PC-3 (cell line): ENCODE measurements at regions of chr12 and their contacts with region 1.

Region 1: DNA sequence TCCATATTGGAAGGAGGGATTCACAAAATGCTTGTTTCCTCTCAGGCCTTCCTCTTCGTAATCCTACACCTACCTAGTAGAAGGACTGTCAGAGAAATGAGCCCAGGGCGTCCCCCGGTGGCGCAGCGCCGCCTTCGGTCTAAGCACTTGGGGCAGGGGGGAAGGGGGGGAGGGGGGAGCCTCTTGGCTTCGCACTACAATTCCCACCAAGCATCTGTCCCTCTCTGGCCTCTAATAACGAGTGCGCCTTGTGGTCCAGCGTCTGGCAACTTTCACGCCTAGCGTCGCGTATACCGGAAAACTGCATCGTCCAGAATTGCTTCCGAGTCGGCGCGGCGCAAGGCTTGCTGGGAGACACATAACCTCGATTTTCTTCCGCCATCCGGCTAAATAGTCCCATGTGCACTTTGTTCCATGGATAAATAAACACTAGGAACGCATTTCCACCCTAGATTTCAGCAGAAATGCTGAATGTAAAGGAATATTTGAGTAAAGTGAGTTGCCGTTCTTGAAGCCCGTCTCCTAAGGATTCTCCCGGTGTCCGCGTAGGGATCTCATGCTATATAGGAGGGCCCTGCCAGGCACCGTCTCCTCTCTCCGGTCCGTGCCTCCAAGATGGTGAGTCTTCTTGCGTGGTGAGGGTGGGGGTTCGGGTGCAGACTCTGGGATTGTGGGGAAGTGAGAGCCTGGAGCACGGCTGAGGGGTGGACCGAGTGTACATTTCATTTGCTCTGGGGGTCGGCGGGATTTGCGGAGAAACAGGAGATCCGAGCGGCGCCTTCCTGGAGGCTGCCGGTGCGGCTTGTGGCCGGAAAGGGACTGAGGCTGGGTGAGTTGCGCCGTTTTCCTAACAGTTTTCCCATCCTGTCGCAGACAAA is at the start of gene RPS26:
- DNase-seq: peak; percentile 99
- ATAC-seq: peak; percentile 95
- H3K4me3 ChIP-seq: peak within 1 kb of the TSS; percentile 80
- H3K27ac ChIP-seq: peak within 1 kb of the TSS; percentile 76
- H3K4me1 ChIP-seq: peaks cover 19% of the 10 kb centered on the region
- H3K27me3 ChIP-seq: no peaks in the 10 kb centered on the region
- CTCF ChIP-seq: peak; percentile 59
- total RNA-seq, gene RPS26: 183 and 320 TPM in 2 replicates

Region 2: GRCh38 chr12:55908726-55909512 is 132.9 kb before region 1 on chr12:
- CTCF ChIA-PET with region 1: no interaction called
- POLR2A ChIA-PET with region 1: no interaction called
- intact Hi-C with region 1: no loop called
- DNase-seq: peak; percentile 42
- ATAC-seq: peak; percentile 79
- H3K4me3 ChIP-seq: no peak overlapping the region
- H3K27ac ChIP-seq: 0 out of 2 replicates have a peak overlapping the region, but pooled peaks have one; percentile 12
- H3K4me1 ChIP-seq: peaks cover 10% of the 10 kb centered on the region; the same call in 1 of the 2 replicates
- H3K27me3 ChIP-seq: no peaks in the 10 kb centered on the region
- CTCF ChIP-seq: no peak

Region 3: GRCh38 chr12:55955800-55956508 is 85.8 kb before region 1 on chr12:
- CTCF ChIA-PET with region 1: no interaction called
- POLR2A ChIA-PET with region 1: no interaction called
- intact Hi-C with region 1: loop called (anchors 1 kb)
- DNase-seq: peak; percentile 95
- ATAC-seq: peak; percentile 96
- H3K4me3 ChIP-seq: no peak overlapping the region
- H3K27ac ChIP-seq: no peak overlapping the region
- H3K4me1 ChIP-seq: peaks cover 27% of the 10 kb centered on the region
- H3K27me3 ChIP-seq: no peaks in the 10 kb centered on the region
- CTCF ChIP-seq: peak; percentile 89

Region 4: DNA sequence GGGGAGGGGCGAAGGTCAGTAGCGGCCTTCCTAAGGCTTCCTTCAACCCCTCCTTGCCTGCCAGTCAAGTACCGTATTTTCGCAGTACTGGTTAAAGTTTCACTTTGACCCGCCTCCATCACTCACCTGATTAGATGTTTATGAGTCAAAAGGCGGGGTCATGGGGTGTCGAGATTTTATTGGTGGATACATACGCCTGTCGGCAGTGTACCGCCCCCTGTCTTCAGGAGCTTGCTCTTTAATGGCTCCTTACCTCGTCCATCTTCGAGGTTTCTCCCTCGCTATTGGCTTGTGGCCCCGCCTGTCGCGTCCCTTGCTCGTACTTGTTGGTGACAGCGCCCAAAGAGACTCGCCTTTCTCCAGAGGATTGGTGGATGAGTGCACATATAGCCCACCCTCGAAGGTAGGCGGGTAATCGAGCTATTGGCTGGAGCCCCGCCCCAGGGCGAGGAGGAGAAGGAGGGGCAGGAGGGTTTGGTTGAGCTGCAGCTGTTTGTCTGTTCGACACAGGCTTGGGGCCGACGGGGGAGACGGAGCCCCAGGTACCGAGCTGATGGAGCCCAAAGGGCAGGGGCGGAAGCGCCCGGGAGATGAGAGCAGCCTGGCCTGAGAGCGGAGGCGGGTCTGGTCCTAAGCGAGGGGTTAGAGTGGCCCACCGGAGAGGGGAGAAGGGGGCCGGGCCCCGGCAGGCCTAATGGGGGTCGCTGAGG is 68.0 kb before region 1 on chr12 and contains the start of gene RAB5B:
- CTCF ChIA-PET with region 1: no interaction called
- POLR2A ChIA-PET with region 1: no interaction called
- intact Hi-C with region 1: loop called (anchors 2 kb)
- DNase-seq: peak; percentile 100
- ATAC-seq: peak; percentile 93
- H3K4me3 ChIP-seq: peak within 1 kb of the TSS; percentile 93
- H3K27ac ChIP-seq: peak within 1 kb of the TSS; percentile 78
- H3K4me1 ChIP-seq: peaks cover 24% of the 10 kb centered on the region
- H3K27me3 ChIP-seq: no peaks in the 10 kb centered on the region
- CTCF ChIP-seq: no peak
- total RNA-seq, gene RAB5B: 48.8 and 50.6 TPM in 2 replicates

Region 5: DNA sequence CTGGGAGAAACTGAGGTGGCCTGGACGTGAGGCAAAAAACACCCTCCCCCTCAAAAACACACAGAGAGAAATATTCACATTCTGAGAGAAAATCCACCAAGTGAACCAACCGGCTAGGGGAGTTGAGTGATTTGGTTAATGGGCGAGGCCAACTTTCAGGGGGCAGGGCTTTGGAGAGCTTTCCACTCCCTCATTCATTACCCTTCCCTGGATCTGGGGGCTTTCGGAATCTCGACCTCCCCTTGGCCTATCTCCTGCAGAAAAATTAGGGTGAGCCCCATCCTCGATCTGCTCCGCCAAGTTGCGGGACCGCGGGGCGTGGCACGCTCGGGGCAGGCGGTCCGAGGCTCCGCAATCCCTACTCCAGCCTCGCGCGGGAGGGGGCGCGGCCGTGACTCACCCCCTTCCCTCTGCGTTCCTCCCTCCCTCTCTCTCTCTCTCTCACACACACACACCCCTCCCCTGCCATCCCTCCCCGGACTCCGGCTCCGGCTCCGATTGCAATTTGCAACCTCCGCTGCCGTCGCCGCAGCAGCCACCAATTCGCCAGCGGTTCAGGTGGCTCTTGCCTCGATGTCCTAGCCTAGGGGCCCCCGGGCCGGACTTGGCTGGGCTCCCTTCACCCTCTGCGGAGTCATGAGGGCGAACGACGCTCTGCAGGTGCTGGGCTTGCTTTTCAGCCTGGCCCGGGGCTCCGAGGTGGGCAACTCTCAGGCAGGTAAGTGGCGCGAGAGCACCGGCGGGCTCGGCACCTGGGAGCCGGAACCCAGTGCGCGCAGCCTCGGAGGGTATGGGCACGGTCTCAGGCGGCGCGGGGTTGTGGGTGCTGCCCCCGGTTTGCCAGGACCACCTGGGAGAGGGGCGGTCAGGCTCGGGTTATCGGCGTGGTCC is 38.1 kb after region 1 on chr12 and contains the start of gene ERBB3:
- CTCF ChIA-PET with region 1: no interaction called
- POLR2A ChIA-PET with region 1: no interaction called
- intact Hi-C with region 1: no loop called
- DNase-seq: peak; percentile 89
- ATAC-seq: peak; percentile 78
- H3K4me3 ChIP-seq: peak within 1 kb of the TSS; percentile 86
- H3K27ac ChIP-seq: peak within 1 kb of the TSS; percentile 82
- H3K4me1 ChIP-seq: peaks cover 19% of the 10 kb centered on the region
- H3K27me3 ChIP-seq: no peaks in the 10 kb centered on the region
- CTCF ChIP-seq: no peak
- total RNA-seq, gene ERBB3: 28.0 and 40.6 TPM in 2 replicates